Ascending aorta (tissue), 2 donors: ENCODE measurements at regions of chr6 and their contacts with region 1.

Region 1: GRCh38 chr6:11496152-11497060 is 41.1 kb upstream of the TMEM170B start:
- DNase-seq: peak in 1 of 2 donors; percentile 80
- H3K4me3 ChIP-seq: peak overlapping the region in 1 of 2 donors; percentile 17
- H3K27ac ChIP-seq: peak overlapping the region; percentile 14 to 33
- H3K4me1 ChIP-seq: peaks cover 0 to 8% of the 10 kb centered on the region in 2 donors
- H3K27me3 ChIP-seq: no peaks in the 10 kb centered on the region
- CTCF ChIP-seq: peak; percentile 83 to 93 (median 91)

Region 2: GRCh38 chr6:10954590-10955010 is 541.8 kb before region 1 on chr6:
- intact Hi-C with region 1: loop called (anchors 10 kb)
- DNase-seq: peak in 1 of 2 donors; percentile 68
- H3K4me3 ChIP-seq: no peak overlapping the region
- H3K27ac ChIP-seq: no peak overlapping the region
- H3K4me1 ChIP-seq: no peaks in the 10 kb centered on the region
- H3K27me3 ChIP-seq: no peaks in the 10 kb centered on the region
- CTCF ChIP-seq: peak; percentile 11 to 34 (median 14)

Region 3: DNA sequence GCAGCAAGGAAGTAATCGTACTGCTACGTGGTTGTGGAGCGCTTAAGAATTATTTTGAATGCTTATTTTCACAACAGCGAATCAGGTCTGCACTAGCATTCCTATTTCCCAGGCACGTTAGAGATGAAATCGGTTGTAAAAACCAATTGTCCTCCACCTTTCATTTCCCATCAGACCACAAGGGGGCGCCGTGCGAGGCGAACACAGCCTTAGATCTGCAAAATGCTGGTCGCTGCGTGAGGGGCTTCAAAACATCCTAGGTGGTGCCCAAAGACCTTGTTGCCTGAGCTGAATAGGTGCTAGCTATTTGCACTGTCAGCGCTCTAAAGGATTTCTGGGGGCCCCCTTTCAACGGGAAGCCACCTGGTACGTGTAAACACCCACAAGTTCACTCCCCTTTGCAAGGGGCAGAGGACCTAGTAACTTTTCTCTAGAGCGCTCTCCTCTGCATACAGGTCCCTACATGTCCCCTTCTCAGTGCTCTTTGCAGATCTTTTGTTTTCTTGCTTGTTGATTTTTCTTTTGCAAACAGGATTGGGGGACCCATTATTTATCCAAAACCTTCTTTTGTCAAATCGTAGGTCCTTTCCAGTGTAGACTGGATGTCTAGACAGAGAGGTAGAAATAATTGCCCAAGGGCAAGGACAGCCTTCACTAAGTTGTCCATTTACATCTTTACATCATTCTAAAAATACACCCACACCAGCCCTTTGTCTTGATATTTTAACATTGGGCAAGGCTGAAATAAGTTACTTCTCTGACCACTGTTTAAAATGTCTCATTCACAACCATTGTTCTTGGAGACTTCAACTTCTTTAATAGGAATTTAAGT is 323.7 kb before region 1 on chr6:
- intact Hi-C with region 1: loop called (anchors 1 kb)
- DNase-seq: peak in 1 of 2 donors; percentile 80
- H3K4me3 ChIP-seq: peak overlapping the region in 1 of 2 donors; percentile 34
- H3K27ac ChIP-seq: peak overlapping the region in 1 of 2 donors; percentile 34
- H3K4me1 ChIP-seq: no peaks in the 10 kb centered on the region
- H3K27me3 ChIP-seq: no peaks in the 10 kb centered on the region
- CTCF ChIP-seq: peak; percentile 79 to 89 (median 85)

Region 4: DNA sequence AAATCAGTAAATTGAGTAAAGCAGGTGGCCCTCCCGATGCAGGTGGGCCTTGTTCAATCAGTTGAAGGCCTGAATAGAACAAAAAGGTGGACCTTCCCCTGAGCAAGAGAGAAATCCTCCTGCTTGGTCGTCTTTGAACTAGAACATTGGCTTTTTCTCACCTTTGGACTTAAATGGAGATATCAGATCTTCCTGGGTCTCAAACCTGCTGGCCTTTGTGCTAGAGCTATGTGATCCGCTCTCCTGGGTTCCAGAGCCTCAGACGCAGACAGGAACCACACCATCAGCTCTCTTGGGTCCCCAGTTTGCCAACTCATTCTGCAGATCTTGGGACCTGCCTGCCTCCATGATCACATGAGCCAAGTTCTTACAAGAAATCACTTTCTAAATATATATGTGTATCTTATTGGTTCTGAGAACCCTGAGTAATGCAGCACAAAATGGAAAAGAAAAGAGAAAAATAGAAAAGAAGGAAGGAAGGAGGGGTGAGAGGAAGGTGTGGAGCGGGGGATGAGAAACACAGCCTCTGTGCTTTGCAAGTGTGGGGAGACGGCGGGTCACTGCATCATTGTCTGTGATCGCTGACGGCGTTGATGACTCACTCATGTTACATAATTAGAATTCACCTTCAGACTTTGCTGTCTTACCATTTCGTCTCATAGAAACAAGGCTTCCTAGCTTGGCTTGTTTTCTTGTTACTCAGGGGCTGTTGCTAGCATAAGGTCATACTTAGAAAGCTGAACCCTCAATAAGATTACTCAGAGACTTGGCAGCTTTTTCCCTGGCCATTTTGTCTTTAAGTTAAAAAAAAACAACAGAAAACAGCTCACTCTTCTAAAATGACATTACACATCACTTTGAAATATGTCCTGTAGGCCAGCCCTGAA is 178.3 kb before region 1 on chr6:
- intact Hi-C with region 1: loop called (anchors 1 kb)
- DNase-seq: peak; percentile 56 to 93
- H3K4me3 ChIP-seq: no peak overlapping the region
- H3K27ac ChIP-seq: peak overlapping the region; percentile 84 to 90
- H3K4me1 ChIP-seq: peaks cover 6 to 18% of the 10 kb centered on the region in 2 donors
- H3K27me3 ChIP-seq: no peaks in the 10 kb centered on the region
- CTCF ChIP-seq: no peak

Region 5: DNA sequence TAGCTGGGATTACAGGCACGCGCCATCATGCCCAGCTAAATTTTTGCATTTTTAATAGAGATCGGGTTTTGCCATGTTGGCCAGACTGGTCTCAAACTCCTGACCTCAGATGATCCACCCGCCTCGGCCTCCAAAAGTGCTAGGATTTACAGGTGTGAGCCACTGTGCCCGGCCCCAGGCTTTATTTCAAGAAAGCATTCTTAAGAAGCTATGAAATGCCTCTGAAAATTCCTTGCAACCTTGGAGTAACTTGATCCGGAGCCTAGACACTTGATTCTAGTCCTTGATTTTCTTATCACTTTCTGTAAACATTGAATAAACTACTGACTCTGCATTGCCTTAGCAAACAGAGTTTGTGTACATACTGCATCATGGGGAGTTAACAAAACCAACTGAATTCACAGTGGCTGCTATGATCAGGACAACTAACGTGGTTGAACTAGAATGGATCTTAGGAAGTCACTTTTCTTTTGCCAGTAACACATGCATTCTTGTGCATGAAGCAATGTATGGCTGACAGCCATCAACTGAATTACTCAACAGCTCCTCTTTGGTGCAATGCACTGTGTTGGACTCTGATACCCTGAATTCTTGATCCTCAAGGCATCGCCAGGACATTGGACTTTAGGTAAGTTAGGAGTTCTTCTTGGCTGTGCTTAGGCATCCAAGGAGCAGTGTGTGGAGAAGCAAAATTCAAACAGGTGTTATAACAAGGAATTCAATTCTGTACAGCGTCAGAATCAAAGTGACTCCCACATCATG is 61.7 kb before region 1 on chr6:
- intact Hi-C with region 1: loop called (anchors 5 kb)
- DNase-seq: peak in 1 of 2 donors; percentile 91
- H3K4me3 ChIP-seq: no peak overlapping the region
- H3K27ac ChIP-seq: peak overlapping the region; percentile 83 to 92
- H3K4me1 ChIP-seq: peaks cover 12 to 58% of the 10 kb centered on the region in 2 donors
- H3K27me3 ChIP-seq: no peaks in the 10 kb centered on the region
- CTCF ChIP-seq: no peak

Region 6: DNA sequence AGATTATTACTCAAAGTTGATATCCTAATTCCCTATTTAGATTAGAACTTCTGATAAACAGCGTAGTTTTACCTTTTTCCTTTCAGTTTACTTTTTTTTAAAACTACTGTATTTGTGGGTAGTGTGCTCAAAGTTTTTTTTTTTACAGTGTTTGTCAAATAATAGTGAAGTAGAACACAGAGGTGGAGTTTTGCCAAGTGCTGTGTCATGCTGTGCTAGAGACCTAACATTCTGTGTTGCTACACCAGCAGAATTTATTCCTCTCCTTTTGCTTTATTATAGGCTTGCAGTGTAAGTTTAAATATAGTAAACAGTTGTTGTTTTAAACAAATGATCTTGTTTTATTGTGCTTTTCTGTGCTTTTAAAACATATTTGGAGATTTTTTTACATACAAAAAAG is 641.1 kb after region 1 on chr6:
- intact Hi-C with region 1: no loop called
- DNase-seq: no peak
- H3K4me3 ChIP-seq: no peak overlapping the region
- H3K27ac ChIP-seq: no peak overlapping the region
- H3K4me1 ChIP-seq: no peaks in the 10 kb centered on the region
- H3K27me3 ChIP-seq: no peaks in the 10 kb centered on the region
- CTCF ChIP-seq: no peak